Activated B cell treated with CpG ODN at 0.5 μM for 24 hours (primary cell): ENCODE measurements at regions of chr15 and their contacts with region 1.

Region 1: DNA sequence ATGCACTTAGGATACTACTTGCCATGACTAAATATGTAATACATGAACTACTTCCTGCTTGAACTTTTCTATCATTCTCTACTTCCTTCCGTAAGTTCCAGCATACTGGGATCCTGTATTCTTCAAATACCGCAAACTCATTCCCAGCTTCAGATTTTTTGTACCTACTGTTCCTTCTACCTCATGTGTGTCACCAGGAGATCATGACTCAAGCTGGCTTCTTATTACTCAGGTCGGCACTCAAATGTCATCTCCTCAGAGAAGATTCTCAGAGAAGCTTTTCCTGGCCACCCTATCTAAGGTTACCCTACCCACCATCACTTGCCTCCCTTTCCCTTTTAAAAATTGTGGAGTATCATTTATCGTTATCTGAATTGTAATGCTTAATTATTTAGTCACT is 66.7 kb downstream of the RFX7 start:
- DNase-seq: no peak
- ATAC-seq: no peak
- H3K4me3 Mint-ChIP-seq: no peak overlapping the region
- H3K27ac Mint-ChIP-seq: no peak overlapping the region
- H3K4me1 Mint-ChIP-seq: peaks cover 27% of the 10 kb centered on the region
- H3K27me3 Mint-ChIP-seq: no peaks in the 10 kb centered on the region
- CTCF ChIP-seq: no peak

Region 2: DNA sequence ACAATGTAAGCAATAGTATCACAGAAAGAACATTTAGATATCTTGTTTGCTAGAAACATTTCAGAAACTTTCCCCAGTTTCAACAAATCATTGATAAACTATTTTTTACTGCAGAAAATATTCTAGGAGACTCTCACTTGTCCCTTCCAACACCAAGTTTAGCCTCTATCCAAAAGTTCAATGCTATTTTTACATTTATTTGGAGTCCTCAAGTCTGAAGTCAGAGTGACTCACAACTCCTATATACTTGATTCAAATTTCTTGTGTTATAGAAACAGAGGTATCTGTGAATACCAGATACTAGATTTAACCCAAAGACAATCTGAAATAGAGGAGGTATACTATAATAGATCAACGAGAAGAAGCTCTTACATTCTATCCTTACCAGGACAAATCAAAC is 17.0 kb after region 1 on chr15:
- CTCF ChIA-PET with region 1: interaction called, 3 read pairs
- POLR2A ChIA-PET with region 1: interaction called, 4 read pairs
- intact Hi-C with region 1: loop called (anchors 2 kb)
- DNase-seq: no peak
- ATAC-seq: no peak
- H3K4me3 Mint-ChIP-seq: no peak overlapping the region
- H3K27ac Mint-ChIP-seq: no peak overlapping the region
- H3K4me1 Mint-ChIP-seq: peaks cover 33% of the 10 kb centered on the region
- H3K27me3 Mint-ChIP-seq: no peaks in the 10 kb centered on the region
- CTCF ChIP-seq: no peak

Region 3: DNA sequence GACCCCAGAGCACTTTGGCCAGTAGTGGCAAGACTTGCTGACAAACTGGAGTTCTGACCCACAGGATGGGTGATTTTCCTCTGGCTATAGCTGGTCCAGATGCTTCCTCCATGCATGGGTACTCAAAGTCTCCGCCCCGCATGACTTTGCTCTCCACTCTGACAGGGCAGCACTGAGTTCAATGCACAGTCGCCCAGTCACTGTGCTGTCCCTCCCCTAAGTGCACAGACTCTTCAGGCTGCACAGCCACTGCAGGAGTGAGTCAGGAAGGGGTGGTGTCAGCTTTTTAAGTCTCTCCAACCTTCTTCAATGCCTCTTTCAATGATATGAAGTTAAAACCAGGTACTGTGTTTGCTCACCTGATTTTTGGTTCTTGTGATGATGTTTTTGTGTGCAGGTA is 206.0 kb after region 1 on chr15:
- CTCF ChIA-PET with region 1: no interaction called
- POLR2A ChIA-PET with region 1: no interaction called
- intact Hi-C with region 1: no loop called
- DNase-seq: no peak
- ATAC-seq: no peak
- H3K4me3 Mint-ChIP-seq: no peak overlapping the region
- H3K27ac Mint-ChIP-seq: no peak overlapping the region
- H3K4me1 Mint-ChIP-seq: no peaks in the 10 kb centered on the region
- H3K27me3 Mint-ChIP-seq: no peaks in the 10 kb centered on the region
- CTCF ChIP-seq: no peak